Caco-2 (cell line): ENCODE measurements at regions of chr17 and their contacts with region 1.

Region 1: DNA sequence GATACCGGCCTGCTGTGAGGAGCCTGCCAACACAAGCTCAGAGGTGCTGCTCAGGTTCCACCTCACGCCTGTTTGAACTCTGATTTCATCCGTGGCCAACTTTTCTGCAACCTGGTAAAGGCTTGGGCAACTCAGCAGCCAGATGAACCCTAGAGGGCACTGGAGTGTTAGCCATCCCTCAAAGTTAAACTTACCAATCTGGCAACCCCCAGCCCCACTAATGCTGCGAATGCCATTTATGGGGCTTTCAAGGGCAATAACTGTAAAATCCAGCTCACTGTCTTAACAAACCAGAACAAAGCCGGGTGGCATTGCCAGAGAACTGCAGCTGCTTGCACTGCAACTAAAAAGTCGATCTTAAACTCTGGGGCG is 105.5 kb downstream of the AXIN2 start:
- DNase-seq: peak in 1 of 2 experiments; percentile 61
- H3K4me3 ChIP-seq: no peak overlapping the region
- H3K4me3 Mint-ChIP-seq: no peak overlapping the region
- H3K27ac Mint-ChIP-seq: no peak overlapping the region
- H3K4me1 ChIP-seq: peaks cover 18% of the 10 kb centered on the region
- H3K4me1 Mint-ChIP-seq: peaks cover 32% of the 10 kb centered on the region
- H3K27me3 ChIP-seq: no peaks in the 10 kb centered on the region
- H3K27me3 Mint-ChIP-seq: no peaks in the 10 kb centered on the region
- CTCF ChIP-seq: peak; percentile 46 to 72

Region 2: GRCh38 chr17:65294179-65294720 is 161.7 kb before region 1 on chr17:
- CTCF ChIA-PET with region 1: interaction called, 4 read pairs
- POLR2A ChIA-PET with region 1: no interaction called
- intact Hi-C with region 1: loop called (anchors 5 kb)
- DNase-seq: peak; percentile 74 to 78
- H3K4me3 ChIP-seq: no peak overlapping the region
- H3K4me3 Mint-ChIP-seq: no peak overlapping the region
- H3K27ac Mint-ChIP-seq: peak overlapping the region; percentile 25
- H3K4me1 ChIP-seq: peaks cover 13% of the 10 kb centered on the region; the same call in 1 of the 2 replicates
- H3K4me1 Mint-ChIP-seq: peaks cover 15% of the 10 kb centered on the region
- H3K27me3 ChIP-seq: no peaks in the 10 kb centered on the region
- H3K27me3 Mint-ChIP-seq: no peaks in the 10 kb centered on the region
- CTCF ChIP-seq: peak; percentile 88 to 90

Region 3: DNA sequence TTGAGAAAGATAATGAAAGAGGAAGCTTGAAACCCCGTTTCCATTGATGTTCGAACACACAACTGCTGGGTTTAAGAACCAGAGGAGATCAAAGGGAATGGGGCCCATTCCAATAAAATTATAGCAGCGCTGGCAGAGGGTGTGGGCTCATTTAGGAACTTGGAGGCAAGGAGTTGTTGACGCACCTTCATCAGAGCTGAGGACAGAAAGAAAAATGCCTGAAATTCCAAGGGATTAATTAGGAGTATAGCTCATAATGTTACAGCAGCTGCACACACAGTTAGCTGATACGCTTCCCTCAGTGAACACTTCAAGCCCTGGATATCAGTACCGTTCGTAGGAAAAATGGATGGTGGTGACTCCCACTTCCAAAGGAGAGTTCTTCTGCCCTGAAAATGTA is 21.7 kb before region 1 on chr17:
- CTCF ChIA-PET with region 1: no interaction called
- POLR2A ChIA-PET with region 1: interaction called, 3 read pairs
- intact Hi-C with region 1: loop called (anchors 2 kb)
- DNase-seq: peak; percentile 74 to 82
- H3K4me3 ChIP-seq: no peak overlapping the region
- H3K4me3 Mint-ChIP-seq: no peak overlapping the region
- H3K27ac Mint-ChIP-seq: peak overlapping the region; percentile 73
- H3K4me1 ChIP-seq: peaks cover 23% of the 10 kb centered on the region
- H3K4me1 Mint-ChIP-seq: peaks cover 14% of the 10 kb centered on the region
- H3K27me3 ChIP-seq: no peaks in the 10 kb centered on the region
- H3K27me3 Mint-ChIP-seq: no peaks in the 10 kb centered on the region
- CTCF ChIP-seq: no peak

Region 4: DNA sequence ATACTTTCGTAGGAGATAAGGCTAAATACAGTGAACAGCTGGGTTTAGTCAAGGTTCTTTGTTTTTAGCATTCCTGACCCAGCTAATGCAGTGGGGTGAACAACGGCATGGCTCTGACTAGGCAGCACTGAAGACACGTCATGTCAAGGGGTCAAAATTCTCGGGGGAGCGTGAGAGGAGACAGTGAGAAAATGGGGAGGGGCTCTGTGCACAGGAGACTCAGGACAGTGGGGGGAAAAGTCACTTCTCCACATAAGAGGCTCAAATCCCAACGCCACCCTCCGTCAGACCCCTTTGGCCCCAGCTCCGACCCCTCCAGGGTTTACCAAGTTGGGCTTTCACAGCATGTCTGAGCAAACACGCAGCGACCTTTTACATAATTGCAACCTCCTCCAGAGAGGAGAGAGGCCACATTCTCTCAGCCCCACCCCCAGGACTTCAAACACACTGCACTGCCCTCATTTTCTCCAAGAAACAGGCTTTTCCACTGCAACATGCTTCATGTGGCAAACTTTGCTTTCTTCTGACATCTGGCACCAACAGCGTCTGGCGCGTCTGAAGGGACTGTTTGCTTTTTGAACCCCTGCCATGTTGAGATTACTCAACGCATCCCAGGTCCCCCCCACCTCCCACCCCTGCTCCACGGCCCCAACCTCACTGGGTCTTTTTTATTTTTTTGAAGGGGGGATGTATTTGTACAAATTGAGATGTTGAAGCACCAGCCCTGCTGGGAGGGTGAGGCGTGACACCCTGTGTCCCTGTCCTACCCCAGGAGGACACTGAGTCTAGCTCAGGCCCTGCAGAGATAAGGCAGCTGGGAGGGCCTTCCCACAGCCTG is 75.5 kb after region 1 on chr17:
- CTCF ChIA-PET with region 1: interaction called, 7 read pairs
- POLR2A ChIA-PET with region 1: no interaction called
- intact Hi-C with region 1: loop called (anchors 1 kb)
- DNase-seq: peak; percentile 88 to 89
- H3K4me3 ChIP-seq: no peak overlapping the region
- H3K4me3 Mint-ChIP-seq: peak overlapping the region; percentile 54
- H3K27ac Mint-ChIP-seq: peak overlapping the region; percentile 88
- H3K4me1 ChIP-seq: peaks cover 69% of the 10 kb centered on the region
- H3K4me1 Mint-ChIP-seq: peaks cover 63% of the 10 kb centered on the region
- H3K27me3 ChIP-seq: no peaks in the 10 kb centered on the region
- H3K27me3 Mint-ChIP-seq: no peaks in the 10 kb centered on the region
- CTCF ChIP-seq: peak; percentile 41 to 58

Region 5: DNA sequence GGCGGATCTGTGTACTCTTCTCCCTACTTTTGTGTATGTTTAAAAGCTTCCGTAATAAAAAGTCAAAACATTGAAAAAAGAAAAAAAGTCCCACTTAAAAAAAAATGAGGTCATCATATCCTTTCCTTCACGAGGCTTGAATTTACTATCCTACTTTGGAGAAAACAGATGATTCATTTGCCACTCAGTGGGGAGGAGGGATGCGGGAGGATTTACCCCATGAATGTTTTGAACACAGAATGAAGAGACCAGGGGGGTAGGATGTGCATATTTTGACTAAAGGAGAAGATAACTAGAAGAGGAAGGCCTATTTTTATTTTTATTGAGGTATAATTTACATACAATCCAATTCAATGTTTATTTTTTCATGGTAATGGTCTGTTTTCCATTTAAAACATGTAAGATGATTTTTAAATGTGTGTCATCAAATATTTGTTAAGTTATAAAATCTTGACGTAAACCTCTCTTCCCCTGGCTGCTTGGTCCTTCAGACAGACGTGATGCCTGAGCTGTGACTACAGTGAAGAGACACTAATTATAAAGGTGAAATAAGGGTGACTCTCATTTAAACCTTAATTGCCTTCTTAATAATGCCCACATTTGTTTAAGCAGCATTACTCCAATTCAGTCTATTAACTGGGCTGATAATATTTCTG is 240.9 kb after region 1 on chr17:
- CTCF ChIA-PET with region 1: no interaction called
- POLR2A ChIA-PET with region 1: no interaction called
- intact Hi-C with region 1: no loop called
- DNase-seq: no peak
- H3K4me3 ChIP-seq: no peak overlapping the region
- H3K4me3 Mint-ChIP-seq: no peak overlapping the region
- H3K27ac Mint-ChIP-seq: no peak overlapping the region
- H3K4me1 ChIP-seq: peaks cover 13% of the 10 kb centered on the region; the same call in 1 of the 2 replicates
- H3K4me1 Mint-ChIP-seq: peaks cover 19% of the 10 kb centered on the region
- H3K27me3 ChIP-seq: no peaks in the 10 kb centered on the region
- H3K27me3 Mint-ChIP-seq: no peaks in the 10 kb centered on the region
- CTCF ChIP-seq: no peak

Region 6: GRCh38 chr17:65794572-65794971 is 338.6 kb after region 1 on chr17:
- CTCF ChIA-PET with region 1: interaction called, 3 read pairs
- POLR2A ChIA-PET with region 1: no interaction called
- intact Hi-C with region 1: loop called (anchors 1 kb)
- DNase-seq: peak; percentile 51 to 52
- H3K4me3 ChIP-seq: no peak overlapping the region
- H3K4me3 Mint-ChIP-seq: no peak overlapping the region
- H3K27ac Mint-ChIP-seq: no peak overlapping the region
- H3K4me1 ChIP-seq: no peaks in the 10 kb centered on the region
- H3K4me1 Mint-ChIP-seq: peaks cover 6% of the 10 kb centered on the region
- H3K27me3 ChIP-seq: no peaks in the 10 kb centered on the region
- H3K27me3 Mint-ChIP-seq: no peaks in the 10 kb centered on the region
- CTCF ChIP-seq: peak; percentile 70 to 75

Region 7: DNA sequence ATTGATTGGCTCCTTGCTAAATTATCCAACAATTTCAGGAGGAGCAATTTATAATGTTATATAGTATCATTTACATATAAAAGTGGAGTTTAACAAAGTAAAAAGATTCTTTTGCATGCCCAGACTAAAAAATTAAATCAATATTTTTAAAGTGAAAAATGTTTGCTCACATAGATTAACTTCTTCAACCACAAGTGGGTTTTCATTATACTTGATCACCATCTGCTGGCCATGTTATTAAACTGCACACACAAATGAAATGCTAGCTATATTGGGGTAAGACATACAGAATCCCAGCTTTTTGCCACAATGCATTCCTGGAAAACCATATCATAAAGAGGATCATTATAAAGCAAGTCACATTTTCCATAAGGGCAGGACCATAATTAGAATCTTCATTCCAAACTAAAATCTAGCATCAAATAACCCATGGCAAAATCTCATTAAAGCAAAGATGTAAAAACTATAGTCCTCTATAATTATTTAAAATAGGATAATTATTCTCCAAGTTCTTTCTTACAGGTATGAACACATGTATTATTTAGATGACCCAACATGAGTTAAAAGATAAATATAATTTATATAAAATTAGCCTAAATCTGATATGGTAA is 709.7 kb after region 1 on chr17:
- CTCF ChIA-PET with region 1: no interaction called
- POLR2A ChIA-PET with region 1: no interaction called
- intact Hi-C with region 1: loop called (anchors 2 kb)
- DNase-seq: peak in 1 of 2 experiments; percentile 55
- H3K4me3 ChIP-seq: no peak overlapping the region
- H3K4me3 Mint-ChIP-seq: no peak overlapping the region
- H3K27ac Mint-ChIP-seq: no peak overlapping the region
- H3K4me1 ChIP-seq: no peaks in the 10 kb centered on the region
- H3K4me1 Mint-ChIP-seq: no peaks in the 10 kb centered on the region
- H3K27me3 ChIP-seq: no peaks in the 10 kb centered on the region
- H3K27me3 Mint-ChIP-seq: no peaks in the 10 kb centered on the region
- CTCF ChIP-seq: peak; percentile 63 to 76